CD4-positive, alpha-beta memory T cell (primary cell): ENCODE measurements at regions of chr14 and their contacts with region 1.

Region 1: DNA sequence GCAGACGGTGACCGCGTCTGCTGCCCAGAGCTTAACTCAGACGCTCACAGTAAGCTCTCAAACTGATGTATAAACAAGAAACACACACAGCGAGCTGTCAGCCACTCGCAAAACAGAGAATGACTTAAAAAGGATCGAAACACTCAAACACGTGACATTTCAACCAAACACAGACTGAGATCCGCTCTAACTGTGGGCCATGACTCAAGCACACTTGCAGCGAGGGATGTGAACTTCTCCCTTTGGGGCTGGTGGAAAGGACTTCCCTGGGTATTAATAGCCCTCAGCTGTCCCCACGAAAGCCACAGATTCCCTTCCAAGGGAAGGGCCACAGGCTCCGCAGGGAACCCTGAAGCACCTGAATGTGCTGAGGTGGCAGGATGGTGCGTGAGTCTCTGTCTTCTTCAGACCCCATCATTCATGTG is 29.1 kb downstream of the CCDC88C start:
- DNase-seq: peak in 4 of 5 donors; percentile 40 to 75 (median 48)
- H3K4me3 ChIP-seq: peak overlapping the region in 1 of 2 donors; percentile 24
- H3K4me3 Mint-ChIP-seq: peak overlapping the region; percentile 53 to 79 (median 73)
- H3K27ac ChIP-seq: peak overlapping the region; percentile 56
- H3K27ac Mint-ChIP-seq: peak overlapping the region; percentile 83 to 96 (median 92)
- H3K4me1 ChIP-seq: peaks cover 100% of the 10 kb centered on the region
- H3K4me1 Mint-ChIP-seq: peaks cover 68 to 97% (median 86%) of the 10 kb centered on the region in 4 donors
- H3K27me3 ChIP-seq: no peaks in the 10 kb centered on the region
- H3K27me3 Mint-ChIP-seq: no peaks in the 10 kb centered on the region

Region 2: DNA sequence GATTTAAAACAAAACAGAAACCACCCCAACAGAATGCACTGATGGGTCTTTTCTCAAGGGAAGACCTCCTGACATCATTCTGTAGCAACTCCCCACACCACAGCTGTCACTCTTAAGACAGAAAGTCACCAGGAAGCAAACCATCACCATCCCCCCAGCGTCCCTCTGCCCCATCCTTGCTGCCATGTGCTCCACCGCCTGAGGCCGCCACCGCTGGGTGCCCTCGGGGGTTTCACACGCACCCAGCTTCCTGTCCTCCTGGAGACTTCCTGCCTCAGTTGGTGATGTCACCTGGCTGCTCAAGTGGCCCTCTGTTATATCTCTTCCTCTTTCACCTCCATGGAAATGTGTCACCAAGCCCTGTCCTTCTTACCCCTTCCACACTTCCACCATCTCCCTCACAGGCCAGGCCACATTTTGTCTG is 72.7 kb before region 1 on chr14:
- CTCF ChIA-PET with region 1: no interaction called
- POLR2A ChIA-PET with region 1: no interaction called
- intact Hi-C with region 1: no loop called
- DNase-seq: peak; percentile 85 to 97 (median 90)
- H3K4me3 ChIP-seq: peak overlapping the region in 1 of 2 donors; percentile 1
- H3K4me3 Mint-ChIP-seq: peak overlapping the region; percentile 62 to 90 (median 86)
- H3K27ac ChIP-seq: peak overlapping the region; percentile 75
- H3K27ac Mint-ChIP-seq: peak overlapping the region; percentile 98 to 100 (median 99)
- H3K4me1 ChIP-seq: peaks cover 97% of the 10 kb centered on the region
- H3K4me1 Mint-ChIP-seq: peaks cover 52 to 95% (median 71%) of the 10 kb centered on the region in 4 donors
- H3K27me3 ChIP-seq: no peaks in the 10 kb centered on the region
- H3K27me3 Mint-ChIP-seq: no peaks in the 10 kb centered on the region

Region 3: GRCh38 chr14:91373591-91374254 is 14.8 kb before region 1 on chr14:
- CTCF ChIA-PET with region 1: interaction called, 3 read pairs
- POLR2A ChIA-PET with region 1: interaction called, 37 read pairs
- intact Hi-C with region 1: loop called (anchors 2 kb)
- DNase-seq: peak; percentile 54 to 89 (median 60)
- H3K4me3 ChIP-seq: peak overlapping the region; percentile 46 to 50
- H3K4me3 Mint-ChIP-seq: peak overlapping the region; percentile 78 to 94 (median 84)
- H3K27ac ChIP-seq: peak overlapping the region; percentile 79
- H3K27ac Mint-ChIP-seq: peak overlapping the region; percentile 93 to 98 (median 96)
- H3K4me1 ChIP-seq: peaks cover 99% of the 10 kb centered on the region
- H3K4me1 Mint-ChIP-seq: peaks cover 78 to 100% (median 90%) of the 10 kb centered on the region in 4 donors
- H3K27me3 ChIP-seq: no peaks in the 10 kb centered on the region
- H3K27me3 Mint-ChIP-seq: no peaks in the 10 kb centered on the region